ENCODE measurements at regions of chr3 and their contacts with region 1.

Region 1: GRCh38 chr3:149765762-149766334 is 13.6 kb upstream of the COMMD2 start:
- DNase-seq: peak; percentile 46 to 73 (median 69)
- H3K4me3 ChIP-seq: no peak overlapping the region
- H3K27ac ChIP-seq: no peak overlapping the region
- H3K4me1 ChIP-seq: no peaks in the 10 kb centered on the region
- H3K27me3 ChIP-seq: no peaks in the 10 kb centered on the region

Region 2: DNA sequence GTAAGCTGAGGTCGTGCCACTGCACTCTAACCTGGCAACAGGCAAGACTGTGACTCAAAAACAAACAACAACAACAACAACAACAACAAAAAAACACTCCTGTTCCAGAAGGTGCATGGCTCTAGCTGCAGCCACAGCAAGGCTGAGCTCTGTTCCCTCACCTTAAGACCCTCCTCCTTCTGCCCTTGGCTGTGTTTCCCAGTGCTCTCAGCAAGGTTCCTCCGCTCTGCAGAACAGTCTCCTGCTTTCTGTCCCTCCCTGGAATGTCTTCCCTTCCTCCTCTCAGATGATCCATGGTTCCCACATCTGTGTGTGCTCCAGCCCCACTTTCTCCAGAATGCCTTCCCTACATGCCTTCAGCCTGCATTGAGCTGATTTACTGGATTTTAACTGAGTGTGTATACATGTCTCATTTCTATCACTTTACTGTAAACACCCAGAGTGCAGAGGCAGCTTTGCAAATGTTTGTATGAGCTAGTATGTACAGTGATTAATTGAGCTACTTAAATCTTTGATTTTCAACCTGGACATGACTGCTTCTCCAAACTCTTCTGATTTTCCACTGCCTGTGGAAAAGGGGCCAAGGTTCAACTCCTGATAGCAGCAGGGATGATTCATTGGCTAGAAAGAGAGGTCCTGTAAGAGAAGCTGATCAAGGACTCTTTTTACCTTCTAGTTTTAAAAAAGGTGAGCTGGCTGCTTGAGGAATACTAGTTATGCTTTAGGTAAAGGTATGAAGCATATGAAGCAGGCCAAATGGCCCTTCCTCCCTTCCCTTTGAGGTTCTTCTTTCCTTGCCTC is 11.8 kb after region 1 on chr3:
- CTCF ChIA-PET with region 1: interaction called, 22 read pairs
- POLR2A ChIA-PET with region 1: interaction called, 10 read pairs
- DNase-seq: no peak
- H3K4me3 ChIP-seq: no peak overlapping the region
- H3K27ac ChIP-seq: no peak overlapping the region
- H3K4me1 ChIP-seq: peaks cover 10 to 23% (median 14%) of the 10 kb centered on the region in 4 experiments
- H3K27me3 ChIP-seq: no peaks in the 10 kb centered on the region

Region 3: GRCh38 chr3:149783576-149783975 is 17.7 kb after region 1 on chr3:
- CTCF ChIA-PET with region 1: interaction called, 22 read pairs
- POLR2A ChIA-PET with region 1: no interaction called
- DNase-seq: peak; percentile 54 to 87 (median 76)
- H3K4me3 ChIP-seq: peak overlapping the region in 2 of 7 experiments; percentile 4 to 19
- H3K27ac ChIP-seq: peak overlapping the region in 1 of 2 experiments; percentile 57
- H3K4me1 ChIP-seq: peaks cover 17 to 40% (median 26%) of the 10 kb centered on the region in 4 experiments
- H3K27me3 ChIP-seq: no peaks in the 10 kb centered on the region

Region 4: GRCh38 chr3:149812606-149813366 is 46.9 kb after region 1 on chr3 and contains the start of gene RNF13:
- CTCF ChIA-PET with region 1: interaction called, 125 read pairs
- POLR2A ChIA-PET with region 1: interaction called, 3 read pairs
- DNase-seq: peak; percentile 95 to 96 (median 95)
- H3K4me3 ChIP-seq: peak within 1 kb of the TSS; percentile 84 to 99 (median 96)
- H3K27ac ChIP-seq: peak within 1 kb of the TSS; percentile 80 to 88
- H3K4me1 ChIP-seq: peaks cover 19 to 50% (median 32%) of the 10 kb centered on the region in 4 experiments
- H3K27me3 ChIP-seq: no peaks in the 10 kb centered on the region